ENCODE measurements at regions of chr4 and their contacts with region 1.

Region 1: DNA sequence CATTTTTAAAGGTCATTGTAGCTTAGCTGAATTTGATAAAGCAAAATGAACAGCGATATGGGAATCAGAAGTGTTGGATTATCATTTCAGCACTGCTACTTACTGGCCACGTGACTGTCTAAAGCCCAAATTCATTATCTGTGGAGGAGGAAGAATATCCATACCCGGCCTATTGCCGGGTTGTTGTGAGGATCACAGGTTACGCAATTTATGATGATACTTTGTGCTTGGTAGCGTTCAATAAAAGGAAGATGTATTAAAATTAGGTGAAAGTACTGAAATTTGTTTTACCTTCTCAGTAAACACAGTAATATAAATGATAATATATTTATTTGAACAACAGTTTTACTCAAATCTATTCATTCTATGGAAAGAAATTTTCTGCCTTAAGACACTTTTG is 1540.2 kb downstream of the ADGRL3 start:
- DNase-seq: no peak
- ATAC-seq: no peak
- H3K4me3 ChIP-seq: no peak overlapping the region
- H3K27ac ChIP-seq: no peak overlapping the region
- H3K4me1 ChIP-seq: no peaks in the 10 kb centered on the region
- H3K27me3 ChIP-seq: no peaks in the 10 kb centered on the region
- CTCF ChIP-seq: no peak
- POLR2A ChIP-seq: no peak

Region 2: GRCh38 chr4:62439051-62439450 is 301.2 kb before region 1 on chr4:
- in situ Hi-C with region 1: no loop called
- intact Hi-C with region 1: no loop called
- DNase-seq: no peak
- ATAC-seq: no peak
- H3K4me3 ChIP-seq: no peak overlapping the region
- H3K27ac ChIP-seq: no peak overlapping the region
- H3K4me1 ChIP-seq: no peaks in the 10 kb centered on the region
- H3K27me3 ChIP-seq: no peaks in the 10 kb centered on the region
- CTCF ChIP-seq: no peak
- POLR2A ChIP-seq: no peak

Region 3: DNA sequence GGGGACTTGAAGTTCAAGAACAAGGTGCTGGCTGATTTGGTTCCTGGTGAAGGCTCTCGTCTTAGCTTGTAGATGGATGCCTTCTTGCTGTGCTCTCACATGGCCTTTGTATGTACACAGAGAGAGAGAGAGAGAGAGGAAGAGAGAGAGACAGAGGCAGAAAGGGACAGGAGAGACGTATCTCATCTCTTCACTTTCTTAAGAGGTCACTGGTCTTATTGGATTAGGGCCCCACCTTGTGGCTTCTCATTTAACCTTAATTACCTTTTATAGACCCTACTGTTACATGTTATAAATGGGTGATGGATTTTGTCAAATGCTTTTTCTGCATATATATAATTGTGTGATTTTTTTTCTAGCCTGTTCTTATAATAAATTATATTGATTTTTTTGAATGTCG is 95.9 kb before region 1 on chr4:
- in situ Hi-C with region 1: loop called in 1 of 4 experiments (anchors 25 kb)
- intact Hi-C with region 1: no loop called
- DNase-seq: no peak
- ATAC-seq: no peak
- H3K4me3 ChIP-seq: no peak overlapping the region
- H3K27ac ChIP-seq: no peak overlapping the region
- H3K4me1 ChIP-seq: no peaks in the 10 kb centered on the region
- H3K27me3 ChIP-seq: no peaks in the 10 kb centered on the region
- CTCF ChIP-seq: no peak
- POLR2A ChIP-seq: no peak

Region 4: GRCh38 chr4:63020661-63021060 is 280.4 kb after region 1 on chr4:
- in situ Hi-C with region 1: no loop called
- intact Hi-C with region 1: no loop called
- DNase-seq: no peak
- ATAC-seq: no peak
- H3K4me3 ChIP-seq: no peak overlapping the region
- H3K27ac ChIP-seq: no peak overlapping the region
- H3K4me1 ChIP-seq: no peaks in the 10 kb centered on the region
- H3K27me3 ChIP-seq: no peaks in the 10 kb centered on the region
- CTCF ChIP-seq: no peak
- POLR2A ChIP-seq: no peak

Measured in gastrocnemius medialis (tissue), 4 donors.